Naive thymus-derived CD8-positive, alpha-beta T cell (primary cell): ENCODE measurements at regions of chr11 and their contacts with region 1.

Region 1: DNA sequence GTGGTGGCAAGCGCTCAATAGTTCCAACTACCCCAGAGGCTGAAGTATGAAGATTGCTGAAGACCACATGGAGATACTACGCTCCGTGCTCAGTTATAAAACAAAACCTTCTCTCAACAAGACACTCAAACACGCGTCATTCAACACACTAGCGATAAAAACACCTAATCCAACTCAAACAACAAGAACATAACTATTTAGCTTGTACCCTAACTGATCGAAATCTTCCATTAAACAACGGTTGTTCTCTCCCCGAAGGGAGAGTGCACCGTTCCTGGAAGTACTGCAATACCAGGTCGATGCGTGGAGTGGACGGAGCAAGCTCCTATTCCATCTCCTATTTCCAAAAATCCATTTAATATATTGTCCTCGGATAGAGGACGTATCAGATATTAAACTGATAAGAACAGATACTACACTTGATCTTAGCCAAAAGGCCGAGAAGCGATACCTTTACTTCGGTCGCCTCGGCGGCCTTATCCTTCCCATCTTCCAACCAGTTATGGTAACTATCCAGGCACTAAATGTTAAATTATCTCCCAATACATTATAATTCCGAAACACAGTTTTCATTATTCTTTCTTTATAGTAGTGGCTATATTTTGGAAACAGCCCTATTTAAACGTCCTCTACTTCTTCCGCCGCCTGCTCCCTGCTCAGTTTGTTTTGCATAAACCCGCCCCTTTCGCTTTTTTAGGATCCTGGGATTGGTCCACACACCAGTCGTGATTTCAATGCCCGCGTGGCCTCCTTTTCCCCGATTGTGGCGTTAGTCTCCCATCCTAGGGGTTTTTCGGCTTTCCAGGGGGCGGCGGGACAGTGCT is 2.2 kb upstream of the WDR74 start:
- DNase-seq: peak; percentile 54 to 94 (median 86)
- ATAC-seq: peak; percentile 57 to 61
- H3K4me3 Mint-ChIP-seq: no peak overlapping the region
- H3K27ac Mint-ChIP-seq: no peak overlapping the region
- H3K4me1 Mint-ChIP-seq: peaks cover 13 to 31% (median 25%) of the 10 kb centered on the region in 4 donors
- H3K27me3 Mint-ChIP-seq: no peaks in the 10 kb centered on the region

Region 2: GRCh38 chr11:62556108-62556871 is 285.3 kb before region 1 on chr11:
- POLR2A ChIA-PET with region 1: interaction called, 40 read pairs
- DNase-seq: peak; percentile 57 to 94 (median 80)
- ATAC-seq: peak; percentile 50 to 56
- H3K4me3 Mint-ChIP-seq: peak overlapping the region; percentile 61 to 90 (median 86)
- H3K27ac Mint-ChIP-seq: peak overlapping the region; percentile 97 to 100 (median 99)
- H3K4me1 Mint-ChIP-seq: peaks cover 50 to 98% (median 88%) of the 10 kb centered on the region in 4 donors
- H3K27me3 Mint-ChIP-seq: peaks cover 0 to 2% (median 0%) of the 10 kb centered on the region in 5 donors

Region 3: DNA sequence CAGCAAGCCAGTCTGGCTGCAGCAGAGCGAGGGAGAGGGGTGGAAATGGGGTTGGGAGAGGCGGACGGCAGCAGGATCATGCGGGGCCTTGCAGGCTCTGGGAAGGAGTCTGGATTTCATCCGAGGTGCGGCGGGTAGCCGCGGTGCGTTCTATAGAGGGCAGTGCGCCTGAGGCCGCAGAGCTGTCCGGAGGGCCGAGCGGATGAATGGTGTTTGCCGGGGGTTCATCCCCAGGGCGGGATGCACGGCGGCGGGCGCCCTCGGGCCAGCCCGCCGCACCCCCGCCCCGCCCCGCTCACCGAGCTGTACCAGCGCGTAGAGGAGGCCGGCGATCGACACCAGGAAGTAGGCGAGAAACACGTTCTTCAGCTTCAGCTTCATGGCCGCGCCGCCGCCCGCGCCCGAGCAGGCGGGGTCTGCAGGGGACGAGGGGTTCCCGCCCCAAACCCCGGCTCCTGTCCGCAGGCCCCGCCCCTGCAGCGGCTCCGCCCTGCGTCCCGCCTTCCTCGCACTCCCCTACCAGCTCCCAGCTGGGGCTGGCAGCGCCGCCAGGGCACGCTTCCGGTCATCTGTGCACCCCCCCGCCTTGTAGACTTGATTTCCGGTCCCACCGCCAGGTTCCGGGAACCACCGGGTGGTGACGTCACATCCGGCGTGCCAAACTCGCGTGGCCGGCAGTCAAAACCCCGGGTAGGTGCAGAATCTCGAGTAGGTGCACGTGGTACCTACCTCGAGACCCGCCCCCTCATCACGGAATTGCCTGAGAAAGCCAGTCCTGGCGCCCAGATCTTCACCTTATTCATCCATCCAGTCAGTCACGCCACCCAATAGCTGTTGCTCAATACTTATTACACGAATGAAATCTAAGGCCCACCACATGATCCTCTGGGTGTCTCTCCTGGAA is 219.8 kb before region 1 on chr11 and contains the start of gene B3GAT3:
- POLR2A ChIA-PET with region 1: interaction called, 15 read pairs
- DNase-seq: peak; percentile 87 to 98 (median 95)
- ATAC-seq: peak; percentile 83 to 85
- H3K4me3 Mint-ChIP-seq: peak within 1 kb of the TSS; percentile 86 to 97 (median 94)
- H3K27ac Mint-ChIP-seq: peak within 1 kb of the TSS; percentile 92 to 99 (median 98)
- H3K4me1 Mint-ChIP-seq: peaks cover 13 to 36% (median 32%) of the 10 kb centered on the region in 4 donors
- H3K27me3 Mint-ChIP-seq: peaks cover 0 to 2% (median 0%) of the 10 kb centered on the region in 5 donors
- polyA plus RNA-seq, gene B3GAT3: 35.6 to 51.3 (median 40.3) TPM

Region 4: DNA sequence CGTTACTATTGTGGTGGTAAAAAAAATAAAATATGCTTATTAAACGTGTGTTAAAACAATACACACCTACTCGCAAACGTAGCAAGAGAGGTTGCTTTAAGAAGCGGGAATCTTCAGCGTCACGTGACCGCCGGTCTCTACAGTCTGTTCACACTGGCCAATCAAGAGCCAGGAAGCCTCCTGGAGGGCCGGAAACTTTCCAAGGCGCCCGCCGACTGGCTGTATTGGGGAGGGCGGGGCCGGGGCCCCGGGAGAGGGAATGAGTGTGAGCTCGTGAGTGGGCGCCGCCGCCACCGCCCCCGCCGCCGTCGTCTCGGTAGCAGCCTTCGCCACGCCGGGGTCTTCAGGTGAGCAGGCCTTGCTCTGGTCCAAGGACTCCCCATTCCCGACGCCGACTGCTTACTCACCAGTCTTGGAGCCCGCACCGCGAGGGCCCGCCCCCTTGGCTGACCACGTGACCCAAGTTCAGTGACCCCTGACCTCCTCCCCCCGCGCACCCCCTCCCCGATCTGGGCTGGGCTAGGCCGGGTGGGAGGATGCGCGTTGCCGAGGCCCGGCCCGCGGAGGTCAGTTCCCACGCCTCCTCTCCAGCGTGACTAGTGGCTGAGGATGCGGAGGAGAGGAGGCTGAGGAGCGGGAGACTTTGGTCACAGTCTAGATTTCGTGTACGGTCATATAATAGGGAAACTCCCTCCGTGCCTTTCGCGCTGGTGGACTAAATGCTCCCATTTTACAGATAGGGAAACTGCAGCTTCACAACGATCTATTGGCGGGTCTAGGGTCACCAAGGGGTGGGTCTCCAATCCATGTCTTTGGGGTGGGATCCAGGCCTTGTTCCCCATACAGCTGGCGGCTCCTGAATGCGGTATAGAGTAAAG is 70.2 kb before region 1 on chr11 and contains the start of gene TAF6L:
- POLR2A ChIA-PET with region 1: interaction called, 35 read pairs
- DNase-seq: peak; percentile 78 to 93 (median 83)
- ATAC-seq: peak; percentile 82 to 94
- H3K4me3 Mint-ChIP-seq: peak within 1 kb of the TSS; percentile 84 to 99 (median 96)
- H3K27ac Mint-ChIP-seq: peak within 1 kb of the TSS; percentile 89 to 98 (median 96)
- H3K4me1 Mint-ChIP-seq: peaks cover 15 to 34% (median 32%) of the 10 kb centered on the region in 4 donors
- H3K27me3 Mint-ChIP-seq: no peaks in the 10 kb centered on the region
- polyA plus RNA-seq, gene TAF6L: 8.7 to 10.8 (median 8.9) TPM

Region 5: DNA sequence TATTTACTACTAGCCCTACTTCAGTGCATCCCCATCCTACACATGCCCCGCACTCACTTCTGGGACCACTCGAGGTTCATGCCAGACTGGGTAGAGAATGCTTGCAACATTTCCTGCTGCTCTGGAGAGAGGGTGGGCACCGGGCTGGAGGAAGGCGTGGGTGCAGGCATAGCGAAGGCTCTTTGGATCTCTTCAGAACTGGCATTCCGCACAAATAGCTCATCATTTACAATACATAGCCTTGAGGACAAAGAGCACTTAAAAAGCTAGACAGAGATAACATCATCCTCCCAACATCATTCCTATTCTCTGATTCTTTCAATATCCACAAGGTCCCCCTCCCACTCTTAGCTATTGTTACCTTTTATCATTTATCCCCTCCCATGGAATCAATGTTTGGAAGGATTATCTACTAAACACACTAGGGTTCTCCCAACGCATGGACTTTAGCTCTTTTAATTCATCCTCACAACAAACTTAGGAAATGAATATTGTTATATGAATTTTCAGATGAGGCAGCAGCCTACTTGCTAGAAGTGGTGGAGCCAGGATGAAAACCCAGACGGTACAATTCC is 47.3 kb before region 1 on chr11:
- POLR2A ChIA-PET with region 1: interaction called, 314 read pairs
- DNase-seq: no peak
- ATAC-seq: no peak
- H3K4me3 Mint-ChIP-seq: peak overlapping the region in 2 of 10 donors; percentile 9 to 36
- H3K27ac Mint-ChIP-seq: peak overlapping the region in 7 of 10 donors; percentile 3 to 75 (median 52)
- H3K4me1 Mint-ChIP-seq: peaks cover 15 to 37% (median 35%) of the 10 kb centered on the region in 4 donors
- H3K27me3 Mint-ChIP-seq: no peaks in the 10 kb centered on the region

Region 6: GRCh38 chr11:62823677-62824076 is 17.9 kb before region 1 on chr11:
- POLR2A ChIA-PET with region 1: interaction called, 17 read pairs
- DNase-seq: no peak
- ATAC-seq: no peak
- H3K4me3 Mint-ChIP-seq: no peak overlapping the region
- H3K27ac Mint-ChIP-seq: peak overlapping the region in 4 of 10 donors; percentile 32 to 71 (median 62)
- H3K4me1 Mint-ChIP-seq: peaks cover 3 to 35% (median 9%) of the 10 kb centered on the region in 4 donors
- H3K27me3 Mint-ChIP-seq: no peaks in the 10 kb centered on the region

Region 7: GRCh38 chr11:62860835-62861563 is 19.4 kb after region 1 on chr11:
- POLR2A ChIA-PET with region 1: interaction called, 479 read pairs
- DNase-seq: no peak
- ATAC-seq: no peak
- H3K4me3 Mint-ChIP-seq: no peak overlapping the region
- H3K27ac Mint-ChIP-seq: peak overlapping the region in 1 of 10 donors; percentile 34
- H3K4me1 Mint-ChIP-seq: peaks cover 8 to 26% (median 14%) of the 10 kb centered on the region in 4 donors
- H3K27me3 Mint-ChIP-seq: peaks cover 0 to under 1% (median 0%) of the 10 kb centered on the region in 5 donors